ENCODE measurements at regions of chr3 and their contacts with region 1.

Region 1: GRCh38 chr3:173221010-173221409 is 80.0 kb upstream of the SPATA16 start:
- DNase-seq: peak in 1 of 2 experiments; percentile 14
- H3K4me3 ChIP-seq: no peak overlapping the region
- H3K4me3 Mint-ChIP-seq: no peak overlapping the region
- H3K27ac Mint-ChIP-seq: no peak overlapping the region
- H3K4me1 ChIP-seq: no peaks in the 10 kb centered on the region
- H3K4me1 Mint-ChIP-seq: no peaks in the 10 kb centered on the region
- H3K27me3 ChIP-seq: no peaks in the 10 kb centered on the region
- H3K27me3 Mint-ChIP-seq: no peaks in the 10 kb centered on the region
- CTCF ChIP-seq: peak in 1 of 2 experiments; percentile 59

Region 2: GRCh38 chr3:173267716-173268115 is 46.7 kb after region 1 on chr3:
- CTCF ChIA-PET with region 1: no interaction called
- POLR2A ChIA-PET with region 1: no interaction called
- intact Hi-C with region 1: loop called (anchors 1 kb)
- DNase-seq: no peak
- H3K4me3 ChIP-seq: no peak overlapping the region
- H3K4me3 Mint-ChIP-seq: no peak overlapping the region
- H3K27ac Mint-ChIP-seq: no peak overlapping the region
- H3K4me1 ChIP-seq: 0 out of 2 replicates have a peak, but pooled peaks cover 4% of the 10 kb centered on the region
- H3K4me1 Mint-ChIP-seq: peaks cover 12% of the 10 kb centered on the region
- H3K27me3 ChIP-seq: no peaks in the 10 kb centered on the region
- H3K27me3 Mint-ChIP-seq: no peaks in the 10 kb centered on the region
- CTCF ChIP-seq: no peak

Region 3: DNA sequence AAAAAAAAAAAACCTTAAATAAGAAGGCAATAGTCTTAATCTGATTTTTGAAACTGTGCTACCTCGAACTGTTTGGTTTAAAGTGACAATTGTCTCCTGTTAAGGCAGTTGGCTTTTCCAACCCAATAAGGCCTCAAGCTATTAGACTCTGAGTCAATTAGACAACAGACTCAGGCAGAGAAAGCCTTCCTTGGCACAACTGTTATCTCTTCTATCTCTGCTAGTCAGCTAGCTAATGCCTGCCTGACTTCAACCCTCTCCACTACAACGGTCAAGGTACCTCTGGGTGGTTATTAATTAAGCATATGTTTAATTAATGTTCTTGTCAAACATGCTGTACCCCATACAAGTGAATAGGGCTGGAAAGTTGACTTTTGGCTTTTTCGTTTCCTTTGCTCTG is 66.4 kb after region 1 on chr3:
- CTCF ChIA-PET with region 1: no interaction called
- POLR2A ChIA-PET with region 1: no interaction called
- intact Hi-C with region 1: no loop called
- DNase-seq: no peak
- H3K4me3 ChIP-seq: no peak overlapping the region
- H3K4me3 Mint-ChIP-seq: no peak overlapping the region
- H3K27ac Mint-ChIP-seq: no peak overlapping the region
- H3K4me1 ChIP-seq: peaks cover 8% of the 10 kb centered on the region; the same call in 1 of the 2 replicates
- H3K4me1 Mint-ChIP-seq: no peaks in the 10 kb centered on the region
- H3K27me3 ChIP-seq: no peaks in the 10 kb centered on the region
- H3K27me3 Mint-ChIP-seq: no peaks in the 10 kb centered on the region
- CTCF ChIP-seq: no peak

Measured in Caco-2 (cell line).